ENCODE measurements at regions of chrX and their contacts with region 1.

Region 1: GRCh38 chrX:2521092-2521926 is 20.5 kb upstream of the DHRSX start:
- DNase-seq: peak; percentile 83
- ATAC-seq: peak; percentile 88
- H3K4me3 ChIP-seq: no peak overlapping the region
- H3K27ac ChIP-seq: peak overlapping the region; percentile 96
- H3K4me1 ChIP-seq: peaks cover 31% of the 10 kb centered on the region
- H3K27me3 ChIP-seq: no peaks in the 10 kb centered on the region
- CTCF ChIP-seq: no peak
- EP300 ChIP-seq: peak; percentile 87 to 95; a peak in 3 of 4 replicates
- POLR2A ChIP-seq: no peak
- RAD21 ChIP-seq: peak; percentile 23; the same call in 1 of the 2 replicates

Region 2: GRCh38 chrX:1727531-1728027 is 793.7 kb before region 1 on chrX:
- CTCF ChIA-PET with region 1: no interaction called
- POLR2A ChIA-PET with region 1: no interaction called
- RAD21 ChIA-PET with region 1: no interaction called
- SMC1A ChIA-PET with region 1: no interaction called
- in situ Hi-C with region 1: no loop called
- intact Hi-C with region 1: no loop called
- DNase-seq: no peak
- ATAC-seq: no peak
- H3K4me3 ChIP-seq: no peak overlapping the region
- H3K27ac ChIP-seq: no peak overlapping the region
- H3K4me1 ChIP-seq: no peaks in the 10 kb centered on the region
- H3K27me3 ChIP-seq: no peaks in the 10 kb centered on the region
- CTCF ChIP-seq: no peak
- EP300 ChIP-seq: no peak
- POLR2A ChIP-seq: no peak
- RAD21 ChIP-seq: no peak

Region 3: DNA sequence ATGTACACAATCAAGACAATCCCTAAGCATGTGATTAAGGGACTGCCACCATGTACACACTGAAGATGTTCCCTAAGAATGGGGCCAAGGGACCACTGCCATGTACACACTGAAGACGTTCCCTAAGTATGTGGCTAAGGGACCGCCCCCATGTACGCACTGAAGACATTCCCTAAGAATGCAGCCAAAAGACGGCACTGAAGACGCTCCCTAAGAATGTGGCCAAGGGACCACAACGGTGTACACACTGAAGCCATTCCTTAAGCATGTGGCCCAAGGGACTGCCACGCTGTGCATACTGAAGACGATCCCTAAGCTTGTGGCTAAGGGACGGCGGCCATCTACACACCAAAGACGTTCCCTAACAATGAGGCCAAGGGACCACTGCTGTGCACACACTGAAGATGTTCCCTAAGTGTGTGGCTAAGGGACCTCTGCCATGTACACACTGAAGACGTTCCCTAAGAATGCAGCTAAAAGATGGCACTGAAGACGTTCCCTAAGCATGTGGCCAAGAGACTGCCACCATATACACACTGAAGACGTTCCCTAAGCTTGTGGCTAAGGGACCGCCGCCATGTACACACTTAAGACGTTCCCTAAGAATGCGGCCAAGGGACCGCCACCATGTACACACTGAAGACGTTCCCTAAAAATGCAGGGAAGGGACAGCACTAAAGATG is 46.9 kb before region 1 on chrX:
- CTCF ChIA-PET with region 1: no interaction called
- POLR2A ChIA-PET with region 1: no interaction called
- RAD21 ChIA-PET with region 1: no interaction called
- SMC1A ChIA-PET with region 1: no interaction called
- in situ Hi-C with region 1: no loop called
- intact Hi-C with region 1: no loop called
- DNase-seq: no peak
- ATAC-seq: no peak
- H3K4me3 ChIP-seq: no peak overlapping the region
- H3K27ac ChIP-seq: no peak overlapping the region
- H3K4me1 ChIP-seq: no peaks in the 10 kb centered on the region
- H3K27me3 ChIP-seq: no peaks in the 10 kb centered on the region
- CTCF ChIP-seq: no peak
- EP300 ChIP-seq: no peak
- POLR2A ChIP-seq: no peak
- RAD21 ChIP-seq: no peak

Region 4: DNA sequence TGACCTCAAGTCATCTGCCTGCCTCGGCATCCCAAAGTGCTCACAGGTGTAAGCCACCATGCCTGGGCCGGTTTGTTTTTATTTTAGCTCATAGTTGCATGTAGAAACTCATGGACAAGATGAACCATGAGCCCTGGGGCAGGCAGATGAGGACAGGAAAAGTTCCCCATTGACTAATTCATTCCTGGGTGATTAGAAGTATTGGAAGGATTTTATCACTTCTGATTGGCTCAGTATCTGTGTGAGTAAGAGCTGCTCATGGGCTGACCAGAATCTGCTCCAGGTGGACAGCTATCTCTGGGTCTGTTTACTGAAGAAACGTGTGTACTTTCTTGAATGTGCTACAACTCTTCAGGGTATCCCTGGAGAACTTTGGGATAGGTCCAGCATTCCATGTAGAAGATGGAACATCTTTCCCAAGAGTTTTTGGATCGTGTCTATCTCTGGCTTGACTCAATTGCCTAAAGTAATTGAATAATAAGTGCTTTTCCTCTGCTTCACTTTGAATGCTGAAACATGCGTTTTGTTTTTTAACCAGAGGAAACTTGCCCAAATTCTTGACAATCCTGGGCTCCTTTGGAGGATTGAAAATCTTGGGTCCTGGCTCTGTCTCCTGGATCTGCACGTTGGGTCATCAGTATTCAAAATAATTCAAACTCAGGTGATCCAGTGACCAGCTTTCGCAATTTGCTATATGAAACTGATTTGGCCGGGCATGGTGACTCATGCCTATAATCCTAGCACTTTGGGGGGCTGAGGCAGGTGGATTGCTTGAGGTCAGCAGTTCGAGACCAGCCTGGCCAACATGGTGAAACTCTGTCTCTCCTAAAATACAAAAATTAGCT is 68.1 kb after region 1 on chrX:
- CTCF ChIA-PET with region 1: no interaction called
- POLR2A ChIA-PET with region 1: no interaction called
- RAD21 ChIA-PET with region 1: no interaction called
- SMC1A ChIA-PET with region 1: no interaction called
- in situ Hi-C with region 1: no loop called
- intact Hi-C with region 1: loop called (anchors 5 kb)
- DNase-seq: no peak
- ATAC-seq: no peak
- H3K4me3 ChIP-seq: no peak overlapping the region
- H3K27ac ChIP-seq: no peak overlapping the region
- H3K4me1 ChIP-seq: no peaks in the 10 kb centered on the region
- H3K27me3 ChIP-seq: peaks cover 2 to 7% of the 10 kb centered on the region in 2 experiments; a peak in 3 of 4 replicates
- CTCF ChIP-seq: no peak
- EP300 ChIP-seq: no peak
- POLR2A ChIP-seq: no peak
- RAD21 ChIP-seq: no peak

Region 5: DNA sequence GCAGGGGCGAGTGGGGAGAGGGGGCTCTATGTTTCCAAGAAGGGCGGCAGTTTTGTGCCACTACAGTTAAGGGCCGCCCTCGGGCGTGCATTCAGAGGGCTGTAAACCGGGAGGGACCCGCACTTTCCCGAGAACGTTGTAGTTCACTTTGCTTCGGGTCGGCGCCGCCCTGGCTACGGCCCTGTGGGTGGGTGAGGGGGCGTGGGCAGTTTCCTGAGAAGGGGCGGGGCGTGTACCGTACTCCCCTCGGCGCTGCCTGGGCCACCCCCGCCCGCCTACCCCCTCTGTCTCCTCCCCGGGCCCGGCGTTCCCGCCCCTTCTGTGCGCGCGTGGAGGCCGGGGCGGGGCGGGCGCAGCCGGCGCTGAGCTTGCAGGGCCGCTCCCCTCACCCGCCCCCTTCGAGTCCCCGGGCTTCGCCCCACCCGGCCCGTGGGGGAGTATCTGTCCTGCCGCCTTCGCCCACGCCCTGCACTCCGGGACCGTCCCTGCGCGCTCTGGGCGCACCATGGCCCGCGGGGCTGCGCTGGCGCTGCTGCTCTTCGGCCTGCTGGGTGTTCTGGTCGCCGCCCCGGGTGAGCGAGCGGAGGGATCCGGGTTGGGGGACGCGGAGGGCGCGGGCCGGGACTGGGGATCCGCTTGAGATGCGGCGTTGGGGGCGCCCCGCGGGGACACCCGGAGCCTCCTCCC is 169.7 kb after region 1 on chrX and contains the start of gene CD99:
- CTCF ChIA-PET with region 1: no interaction called
- POLR2A ChIA-PET with region 1: no interaction called
- RAD21 ChIA-PET with region 1: no interaction called
- SMC1A ChIA-PET with region 1: no interaction called
- in situ Hi-C with region 1: no loop called
- intact Hi-C with region 1: loop called (anchors 10 kb)
- DNase-seq: peak; percentile 46
- ATAC-seq: peak; percentile 94
- H3K4me3 ChIP-seq: peak within 1 kb of the TSS; percentile 91
- H3K27ac ChIP-seq: peak within 1 kb of the TSS; percentile 65
- H3K4me1 ChIP-seq: peaks cover under 1% of the 10 kb centered on the region; the same call in 1 of the 2 replicates
- H3K27me3 ChIP-seq: no peaks in the 10 kb centered on the region
- CTCF ChIP-seq: no peak
- EP300 ChIP-seq: no peak
- POLR2A ChIP-seq: peak; percentile 81
- RAD21 ChIP-seq: no peak
- polyA plus RNA-seq, gene CD99: 24.8 to 52.1 TPM

Measured in GM12878 (cell line).